ENCODE measurements at regions of chr6 and their contacts with region 1.

Region 1: GRCh38 chr6:33384581-33385020 is 7.0 kb upstream of the KIFC1 start:
- DNase-seq: no peak
- ATAC-seq: peak; percentile 68

Region 2: DNA sequence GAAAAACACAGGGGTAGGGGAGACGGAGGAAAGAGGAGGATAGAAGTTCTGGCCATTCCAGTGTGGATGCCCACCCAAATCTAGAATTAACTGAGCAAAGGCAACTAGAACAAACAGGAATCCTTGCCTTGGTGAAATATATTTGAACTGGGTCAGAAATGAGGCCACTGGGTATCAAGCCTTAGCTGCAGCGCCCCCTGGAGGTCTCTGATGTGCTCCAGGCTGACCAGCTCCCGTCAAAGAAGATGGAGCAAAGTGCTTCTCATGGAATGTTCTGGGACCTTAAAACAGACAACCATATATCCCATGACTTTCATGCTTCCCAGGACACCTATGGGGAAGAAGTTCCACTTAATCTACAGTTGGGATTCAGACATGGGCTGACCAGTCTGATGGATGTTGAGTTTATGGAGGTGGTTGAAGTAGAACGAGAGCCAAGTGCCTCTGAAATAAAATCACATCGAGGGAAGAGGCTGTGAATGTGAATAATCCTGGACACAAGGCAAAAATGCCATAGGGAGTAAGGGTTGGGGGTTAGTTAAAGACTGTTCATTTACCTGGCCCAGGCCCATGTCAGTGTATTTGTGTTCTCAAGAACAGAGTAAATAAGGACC is 258.4 kb before region 1 on chr6:
- intact Hi-C with region 1: no loop called
- DNase-seq: peak; percentile 39 to 87
- ATAC-seq: peak; percentile 45

Region 3: GRCh38 chr6:33454009-33454946 is 69.7 kb after region 1 on chr6 and contains the start of gene ZBTB9:
- intact Hi-C with region 1: loop called in 1 of 2 experiments (anchors 10 kb)
- DNase-seq: peak; percentile 97 to 98
- ATAC-seq: peak; percentile 99
- total RNA-seq, gene ZBTB9: 3.9 to 7.9 TPM

Region 4: DNA sequence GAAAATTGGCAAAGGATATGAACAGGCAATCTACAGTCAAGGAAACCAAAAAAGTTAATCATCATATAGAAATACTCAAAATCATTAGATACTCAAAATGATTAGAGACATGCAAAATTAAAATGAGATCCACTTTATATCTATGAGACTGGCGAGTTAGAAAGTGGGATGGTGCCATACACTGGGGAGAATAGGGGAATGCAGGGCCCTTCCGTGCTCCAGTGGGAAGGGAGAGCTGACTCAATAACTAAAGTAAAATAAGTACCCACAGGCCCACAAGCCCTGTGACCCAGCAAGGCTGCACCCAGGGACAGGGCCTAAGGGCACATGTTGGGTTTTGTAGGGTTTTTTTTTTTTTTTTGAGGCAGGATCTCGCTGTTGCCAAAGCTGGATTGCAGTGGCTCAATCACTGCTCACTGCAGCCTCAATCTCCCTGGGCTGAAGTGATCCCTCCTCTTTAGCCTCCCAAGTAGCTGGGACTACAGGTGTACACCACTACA is 150.6 kb after region 1 on chr6:
- intact Hi-C with region 1: no loop called
- DNase-seq: no peak
- ATAC-seq: no peak

Measured in left colon (tissue), 2 donors.